GM12878 (cell line): ENCODE measurements at regions of chr4 and their contacts with region 1.

Region 1: GRCh38 chr4:16196478-16197393 is 29.5 kb downstream of the TAPT1 start:
- DNase-seq: peak; percentile 21
- ATAC-seq: peak; percentile 66
- H3K4me3 ChIP-seq: no peak overlapping the region
- H3K27ac ChIP-seq: no peak overlapping the region
- H3K4me1 ChIP-seq: peaks cover 2% of the 10 kb centered on the region; the same call in 1 of the 2 replicates
- H3K27me3 ChIP-seq: no peaks in the 10 kb centered on the region
- CTCF ChIP-seq: peak in 1 of 3 experiments; percentile 33; a peak in 2 of 6 replicates
- EP300 ChIP-seq: no peak
- POLR2A ChIP-seq: no peak
- RAD21 ChIP-seq: peak; percentile 21; the same call in 1 of the 2 replicates

Region 2: GRCh38 chr4:16026160-16026761 is 170.5 kb before region 1 on chr4:
- CTCF ChIA-PET with region 1: interaction called, 19 read pairs
- POLR2A ChIA-PET with region 1: no interaction called
- RAD21 ChIA-PET with region 1: interaction called, 4 read pairs
- SMC1A ChIA-PET with region 1: interaction called, 5 read pairs
- in situ Hi-C with region 1: no loop called
- intact Hi-C with region 1: loop called (anchors 1 kb)
- DNase-seq: peak; percentile 25
- ATAC-seq: peak; percentile 58
- H3K4me3 ChIP-seq: no peak overlapping the region
- H3K27ac ChIP-seq: no peak overlapping the region
- H3K4me1 ChIP-seq: no peaks in the 10 kb centered on the region
- H3K27me3 ChIP-seq: no peaks in the 10 kb centered on the region; a peak in 1 of 4 replicates
- CTCF ChIP-seq: peak; percentile 64 to 78 (median 64)
- EP300 ChIP-seq: no peak
- POLR2A ChIP-seq: no peak
- RAD21 ChIP-seq: peak; percentile 92

Region 3: DNA sequence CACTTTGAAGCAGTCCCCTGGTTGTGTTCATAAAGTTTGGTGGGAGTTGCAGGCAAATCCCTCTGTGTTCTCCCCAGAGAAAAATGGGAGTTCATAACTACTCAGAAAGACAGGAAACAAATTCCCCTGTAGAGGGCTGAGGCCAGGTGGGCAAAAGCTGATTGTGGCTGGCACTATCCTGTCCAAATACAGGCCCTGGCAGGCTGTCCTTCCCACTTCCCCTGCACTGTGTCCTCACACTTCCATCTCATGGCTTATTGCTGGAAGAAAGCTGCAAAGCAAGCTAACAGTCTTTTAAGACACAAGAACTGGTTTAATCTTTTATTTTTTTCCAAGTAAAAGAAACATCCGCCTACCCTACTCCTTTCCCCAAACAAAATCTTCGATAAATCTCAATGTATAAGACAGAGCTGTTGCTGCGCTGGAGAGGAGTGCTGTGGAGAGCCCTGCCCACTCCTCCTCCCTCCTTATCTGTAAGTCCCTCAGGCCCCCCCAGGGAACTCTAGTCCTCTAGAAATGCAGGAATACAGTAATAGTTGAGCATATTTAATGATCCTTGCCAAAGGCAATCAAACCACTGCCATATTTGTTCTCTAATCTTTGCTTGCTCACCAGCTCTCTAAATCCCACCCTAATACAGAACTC is 15.5 kb after region 1 on chr4:
- CTCF ChIA-PET with region 1: interaction called, 78 read pairs
- POLR2A ChIA-PET with region 1: no interaction called
- RAD21 ChIA-PET with region 1: interaction called, 4 read pairs
- SMC1A ChIA-PET with region 1: interaction called, 12 read pairs
- in situ Hi-C with region 1: no loop called
- intact Hi-C with region 1: no loop called
- DNase-seq: no peak
- ATAC-seq: peak; percentile 54
- H3K4me3 ChIP-seq: no peak overlapping the region
- H3K27ac ChIP-seq: no peak overlapping the region; the same call in 1 of the 2 replicates
- H3K4me1 ChIP-seq: peaks cover 13% of the 10 kb centered on the region
- H3K27me3 ChIP-seq: no peaks in the 10 kb centered on the region
- CTCF ChIP-seq: no peak
- EP300 ChIP-seq: no peak
- POLR2A ChIP-seq: no peak
- RAD21 ChIP-seq: no peak

Region 4: DNA sequence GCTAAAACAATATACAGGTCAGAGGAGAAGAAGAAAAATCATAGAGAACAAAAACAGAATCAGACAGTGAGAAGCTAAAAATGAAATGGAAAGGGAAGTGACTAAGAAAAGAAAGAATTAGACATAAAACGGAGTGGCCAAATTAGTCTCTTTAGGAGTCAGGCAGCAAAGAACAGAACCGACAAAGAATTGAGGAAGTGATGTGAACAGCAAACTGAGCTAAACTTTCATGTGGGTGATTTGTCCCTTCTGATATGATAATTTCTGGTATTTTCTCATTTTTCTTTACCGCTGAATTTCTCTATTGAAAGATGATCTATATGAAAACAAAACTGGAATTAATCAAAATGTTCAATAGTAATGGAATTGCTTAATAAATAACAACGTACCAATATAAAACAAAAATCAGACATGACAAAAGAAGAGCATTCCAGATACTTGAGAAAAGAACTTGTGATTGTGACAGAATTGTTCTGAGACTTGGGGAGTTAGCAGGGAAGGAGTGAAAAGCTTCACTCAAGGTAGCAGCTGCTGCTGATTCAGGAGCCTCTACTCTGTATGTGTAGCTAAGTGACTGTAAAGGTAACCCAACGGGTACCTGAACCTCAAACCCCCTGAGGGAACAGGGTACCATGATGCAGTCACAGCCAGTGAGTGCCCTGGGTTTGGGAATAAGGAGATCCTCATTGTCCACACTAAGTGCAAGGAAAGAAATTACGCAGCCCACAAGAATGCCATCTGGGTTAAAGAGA is 20.7 kb after region 1 on chr4:
- CTCF ChIA-PET with region 1: interaction called, 21 read pairs
- POLR2A ChIA-PET with region 1: no interaction called
- RAD21 ChIA-PET with region 1: interaction called, 4 read pairs
- SMC1A ChIA-PET with region 1: interaction called, 10 read pairs
- in situ Hi-C with region 1: no loop called
- intact Hi-C with region 1: no loop called
- DNase-seq: no peak
- ATAC-seq: peak; percentile 89
- H3K4me3 ChIP-seq: no peak overlapping the region
- H3K27ac ChIP-seq: peak overlapping the region; percentile 58
- H3K4me1 ChIP-seq: peaks cover 11% of the 10 kb centered on the region
- H3K27me3 ChIP-seq: no peaks in the 10 kb centered on the region
- CTCF ChIP-seq: no peak
- EP300 ChIP-seq: no peak
- POLR2A ChIP-seq: no peak
- RAD21 ChIP-seq: no peak